HCT116 (cell line): ENCODE measurements at regions of chr5 and their contacts with region 1.

Region 1: DNA sequence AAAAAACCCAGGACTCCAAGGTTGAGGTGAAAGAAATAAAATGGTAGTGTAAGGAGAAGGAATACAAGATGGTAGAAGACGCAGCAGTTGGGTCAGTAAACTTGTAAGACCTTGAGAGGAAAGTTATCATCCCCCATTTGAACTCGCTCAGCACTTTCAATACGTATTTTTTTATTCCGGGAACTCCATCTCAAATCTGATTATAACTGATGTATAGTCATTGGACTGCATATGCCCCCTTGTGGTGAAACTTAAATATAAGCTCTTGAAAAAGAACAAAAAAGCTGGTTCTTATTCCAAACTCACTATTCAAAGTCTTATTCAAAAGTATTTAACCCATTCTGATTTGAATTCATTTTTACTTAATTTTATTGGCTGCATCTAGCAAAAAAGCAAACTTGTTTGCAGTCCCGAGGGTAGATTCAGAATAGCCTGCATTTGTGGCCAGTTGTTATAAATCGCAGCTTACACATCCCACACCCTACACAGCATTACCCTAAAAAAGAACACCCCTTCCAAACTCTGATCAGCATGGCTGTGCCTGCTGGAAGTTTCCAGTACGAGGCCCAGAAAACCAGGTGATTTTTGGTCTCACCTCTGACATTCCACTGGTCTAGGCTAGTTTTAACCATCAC is 118.0 kb downstream of the ESM1 start:
- DNase-seq: peak; percentile 38
- ATAC-seq: peak; percentile 59
- H3K4me3 ChIP-seq: no peak overlapping the region
- H3K27ac ChIP-seq: no peak overlapping the region
- H3K4me1 ChIP-seq: peaks cover 0 to 3% of the 10 kb centered on the region in 2 experiments; a peak in 1 of 4 replicates
- H3K27me3 ChIP-seq: peaks cover 10% of the 10 kb centered on the region; the same call in 1 of the 2 replicates
- CTCF ChIP-seq: peak; percentile 44 to 77 (median 69); a peak in 5 of 6 replicates
- POLR2A ChIP-seq: no peak
- RAD21 ChIP-seq: peak; percentile 66

Region 2: GRCh38 chr5:54415896-54416601 is 451.4 kb before region 1 on chr5:
- CTCF ChIA-PET with region 1: interaction called, 11 read pairs
- POLR2A ChIA-PET with region 1: no interaction called
- RAD21 ChIA-PET with region 1: no interaction called
- intact Hi-C with region 1: no loop called
- DNase-seq: no peak
- ATAC-seq: no peak; the same call in 1 of the 2 replicates
- H3K4me3 ChIP-seq: no peak overlapping the region
- H3K27ac ChIP-seq: no peak overlapping the region
- H3K4me1 ChIP-seq: peaks cover 0 to 5% of the 10 kb centered on the region in 2 experiments; a peak in 1 of 4 replicates
- H3K27me3 ChIP-seq: no peaks in the 10 kb centered on the region
- CTCF ChIP-seq: no peak
- POLR2A ChIP-seq: no peak
- RAD21 ChIP-seq: no peak

Region 3: DNA sequence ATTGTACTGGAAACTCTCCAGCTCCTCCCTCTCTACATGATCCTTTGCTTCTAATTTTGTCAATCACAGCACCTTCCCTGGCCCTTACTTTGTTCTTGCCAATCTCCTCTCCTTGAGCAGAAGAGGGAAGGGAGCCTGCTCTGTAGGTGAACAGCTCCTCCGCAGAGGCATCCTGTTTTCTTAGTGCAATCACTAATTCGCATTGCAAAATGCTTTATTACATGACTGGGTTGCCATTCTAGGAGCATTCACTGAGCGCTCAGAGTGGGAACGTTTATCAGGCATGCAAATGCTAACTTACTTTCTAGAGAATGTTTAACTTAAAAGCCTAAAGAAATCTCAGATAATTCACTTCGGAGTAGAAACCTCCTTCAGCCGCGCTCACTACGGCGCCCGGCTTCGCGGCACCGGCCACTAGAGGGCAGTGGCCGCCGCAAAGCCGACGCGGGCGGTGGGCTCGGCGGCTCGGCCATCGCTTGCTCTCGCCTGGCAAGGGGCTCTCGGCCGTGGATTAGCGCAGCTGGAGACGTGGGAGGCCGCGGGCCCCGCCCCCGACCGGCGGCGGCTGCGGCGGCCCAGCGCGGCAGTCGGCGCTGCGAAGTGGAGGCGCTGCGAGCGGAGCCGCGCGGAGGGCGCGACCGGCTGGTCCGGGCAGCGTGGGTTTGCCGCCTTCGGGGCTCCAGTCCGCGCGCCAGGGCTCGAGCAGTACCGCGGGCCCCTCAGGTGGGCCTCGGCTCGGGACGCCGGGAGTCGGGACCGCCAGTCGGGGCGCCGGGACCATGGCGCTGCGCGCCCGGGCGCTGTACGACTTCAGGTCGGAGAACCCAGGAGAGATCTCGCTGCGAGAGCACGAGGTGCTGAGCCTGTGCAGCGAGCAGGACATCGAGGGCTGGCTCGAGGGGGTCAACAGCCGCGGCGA is 350.0 kb before region 1 on chr5 and contains the start of gene SNX18:
- CTCF ChIA-PET with region 1: interaction called, 57 read pairs
- POLR2A ChIA-PET with region 1: interaction called, 5 read pairs
- RAD21 ChIA-PET with region 1: interaction called, 7 to 8 read pairs
- intact Hi-C with region 1: loop called (anchors 2 kb)
- DNase-seq: peak; percentile 74
- ATAC-seq: peak; percentile 88
- H3K4me3 ChIP-seq: peak within 1 kb of the TSS; percentile 65 to 70
- H3K27ac ChIP-seq: peak within 1 kb of the TSS; percentile 78
- H3K4me1 ChIP-seq: peaks cover 2 to 16% of the 10 kb centered on the region in 2 experiments; a peak in 1 of 4 replicates
- H3K27me3 ChIP-seq: no peaks in the 10 kb centered on the region
- CTCF ChIP-seq: peak; percentile 89 to 95 (median 92)
- POLR2A ChIP-seq: peak; percentile 71
- RAD21 ChIP-seq: peak; percentile 93
- total RNA-seq, gene SNX18: 16.0 TPM

Region 4: DNA sequence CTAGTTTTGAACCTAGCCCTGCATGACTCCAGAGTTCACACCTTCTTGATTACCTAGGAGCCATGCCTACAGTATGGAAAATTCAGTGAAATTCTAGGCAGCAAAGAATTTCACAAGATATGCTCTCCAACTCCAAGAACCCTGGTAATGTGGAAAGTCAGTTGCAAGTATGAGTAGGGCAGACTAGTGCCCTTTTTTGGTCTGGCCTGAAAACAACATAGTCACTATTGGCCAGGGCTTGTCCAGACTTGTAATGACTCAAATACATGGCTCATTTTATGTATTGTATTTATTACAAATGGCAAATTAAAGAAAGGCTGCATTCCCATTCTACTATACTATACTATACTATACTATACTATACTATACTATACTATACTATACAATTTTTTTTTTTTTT is 42.4 kb before region 1 on chr5:
- CTCF ChIA-PET with region 1: no interaction called
- POLR2A ChIA-PET with region 1: no interaction called
- RAD21 ChIA-PET with region 1: no interaction called
- intact Hi-C with region 1: no loop called
- DNase-seq: no peak
- ATAC-seq: no peak
- H3K4me3 ChIP-seq: no peak overlapping the region
- H3K27ac ChIP-seq: no peak overlapping the region
- H3K4me1 ChIP-seq: no peaks in the 10 kb centered on the region
- H3K27me3 ChIP-seq: peaks cover 2% of the 10 kb centered on the region; the same call in 1 of the 2 replicates
- CTCF ChIP-seq: no peak
- POLR2A ChIP-seq: no peak
- RAD21 ChIP-seq: no peak

Region 5: GRCh38 chr5:54852007-54852406 is 15.4 kb before region 1 on chr5:
- CTCF ChIA-PET with region 1: interaction called, 17 read pairs
- POLR2A ChIA-PET with region 1: no interaction called
- RAD21 ChIA-PET with region 1: no interaction called
- intact Hi-C with region 1: no loop called
- DNase-seq: no peak
- ATAC-seq: no peak
- H3K4me3 ChIP-seq: no peak overlapping the region
- H3K27ac ChIP-seq: no peak overlapping the region
- H3K4me1 ChIP-seq: no peaks in the 10 kb centered on the region
- H3K27me3 ChIP-seq: peaks cover 7% of the 10 kb centered on the region; the same call in 1 of the 2 replicates
- CTCF ChIP-seq: peak in 2 of 3 experiments; percentile 32 to 40; a peak in 3 of 6 replicates
- POLR2A ChIP-seq: no peak
- RAD21 ChIP-seq: no peak

Region 6: GRCh38 chr5:55004729-55005128 is 137.3 kb after region 1 on chr5:
- CTCF ChIA-PET with region 1: no interaction called
- POLR2A ChIA-PET with region 1: no interaction called
- RAD21 ChIA-PET with region 1: no interaction called
- intact Hi-C with region 1: no loop called
- DNase-seq: no peak
- ATAC-seq: no peak
- H3K4me3 ChIP-seq: no peak overlapping the region
- H3K27ac ChIP-seq: no peak overlapping the region
- H3K4me1 ChIP-seq: no peaks in the 10 kb centered on the region
- H3K27me3 ChIP-seq: peaks cover 54% of the 10 kb centered on the region
- CTCF ChIP-seq: no peak
- POLR2A ChIP-seq: no peak
- RAD21 ChIP-seq: no peak

Region 7: GRCh38 chr5:55159763-55160492 is 292.5 kb after region 1 on chr5 and contains the start of gene GPX8:
- CTCF ChIA-PET with region 1: interaction called, 24 read pairs
- POLR2A ChIA-PET with region 1: interaction called, 3 read pairs
- RAD21 ChIA-PET with region 1: no interaction called
- intact Hi-C with region 1: no loop called
- DNase-seq: peak; percentile 77
- ATAC-seq: peak; percentile 91
- H3K4me3 ChIP-seq: peak within 1 kb of the TSS; percentile 63 to 77
- H3K27ac ChIP-seq: peak within 1 kb of the TSS; percentile 52
- H3K4me1 ChIP-seq: peaks cover 0 to 19% of the 10 kb centered on the region in 2 experiments; a peak in 2 of 4 replicates
- H3K27me3 ChIP-seq: no peaks in the 10 kb centered on the region
- CTCF ChIP-seq: peak; percentile 44 to 83 (median 81); a peak in 5 of 6 replicates
- POLR2A ChIP-seq: peak; percentile 80
- RAD21 ChIP-seq: peak; percentile 90
- total RNA-seq, gene GPX8: 36.5 TPM